ENCODE measurements at regions of chr19 and their contacts with region 1.

Region 1: GRCh38 chr19:17859533-17860330 is at the start of gene RPL18A:
- DNase-seq: peak; percentile 94 to 100 (median 99)
- ATAC-seq: peak; percentile 93 to 96 (median 96)
- H3K4me3 ChIP-seq: peak within 1 kb of the TSS; percentile 84 to 94
- H3K4me3 Mint-ChIP-seq: peak within 1 kb of the TSS; percentile 88 to 100 (median 90)
- H3K27ac ChIP-seq: peak within 1 kb of the TSS; percentile 48
- H3K27ac Mint-ChIP-seq: peak within 1 kb of the TSS; percentile 91 to 98
- H3K4me1 ChIP-seq: peaks cover 7 to 43% of the 10 kb centered on the region in 2 experiments
- H3K4me1 Mint-ChIP-seq: peaks cover 28 to 43% (median 32%) of the 10 kb centered on the region in 3 donors
- H3K27me3 ChIP-seq: no peaks in the 10 kb centered on the region
- H3K27me3 Mint-ChIP-seq: no peaks in the 10 kb centered on the region
- total RNA-seq, gene RPL18A: 3,000 to 4,207 (median 4,048) TPM

Region 2: GRCh38 chr19:17841810-17842662 is 17.7 kb before region 1 on chr19:
- CTCF ChIA-PET with region 1: interaction called, 3 to 10 read pairs
- POLR2A ChIA-PET with region 1: interaction called in 1 of 2 experiments, 6 read pairs
- DNase-seq: peak in 33 of 35 experiments; percentile 20 to 66 (median 46)
- ATAC-seq: peak; percentile 17 to 68 (median 40)
- H3K4me3 ChIP-seq: no peak overlapping the region
- H3K4me3 Mint-ChIP-seq: no peak overlapping the region
- H3K27ac ChIP-seq: no peak overlapping the region
- H3K27ac Mint-ChIP-seq: no peak overlapping the region
- H3K4me1 ChIP-seq: peaks cover 9 to 57% of the 10 kb centered on the region in 2 experiments
- H3K4me1 Mint-ChIP-seq: peaks cover 37 to 41% (median 41%) of the 10 kb centered on the region in 3 donors
- H3K27me3 ChIP-seq: no peaks in the 10 kb centered on the region
- H3K27me3 Mint-ChIP-seq: no peaks in the 10 kb centered on the region

Region 3: DNA sequence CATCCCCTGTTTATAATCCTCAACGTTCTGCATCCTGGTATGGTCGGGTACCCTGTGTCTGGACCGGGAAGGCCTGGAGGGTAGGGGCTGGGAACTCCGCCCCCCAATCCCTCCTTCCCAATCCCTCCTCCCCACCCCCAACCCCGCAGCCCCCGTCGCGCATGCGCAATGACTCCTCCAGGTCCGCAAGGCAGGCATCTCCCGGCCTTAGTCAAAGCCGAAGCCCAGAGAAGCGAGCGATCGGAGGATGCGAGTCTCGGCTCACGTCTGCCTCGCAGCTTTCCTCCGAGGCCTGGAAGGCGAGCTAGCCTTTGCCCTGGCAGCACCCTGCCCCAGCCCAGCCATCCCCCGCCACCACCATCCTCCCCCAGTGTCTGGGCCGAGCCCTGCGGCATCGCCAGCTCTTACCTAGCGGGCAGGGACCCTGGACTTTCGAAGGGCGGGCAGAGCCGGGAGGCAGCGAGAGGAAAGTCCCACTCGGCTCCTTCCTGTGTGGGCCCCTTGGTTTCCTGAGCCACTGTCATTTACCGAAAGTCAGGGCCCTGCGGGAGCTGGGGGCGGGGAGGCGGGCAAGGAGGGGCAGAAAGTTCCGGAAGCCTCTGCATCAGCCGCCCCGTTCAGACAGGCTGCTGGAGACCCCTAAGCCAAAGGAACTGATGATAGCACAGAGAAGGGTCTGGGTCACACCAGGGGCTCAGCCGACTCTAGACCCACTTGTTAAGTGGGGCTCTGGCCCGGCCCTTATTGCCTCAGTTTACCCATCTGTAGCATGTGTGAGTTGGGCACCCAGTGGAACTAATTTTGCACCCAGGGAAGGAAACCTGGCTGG is 12.0 kb before region 1 on chr19 and contains the start of gene JAK3:
- CTCF ChIA-PET with region 1: interaction called, 4 to 41 read pairs
- POLR2A ChIA-PET with region 1: interaction called, 6 to 14 read pairs
- DNase-seq: peak; percentile 67 to 92 (median 87)
- ATAC-seq: peak; percentile 82 to 90 (median 82)
- H3K4me3 ChIP-seq: peak within 1 kb of the TSS; percentile 68 to 73
- H3K4me3 Mint-ChIP-seq: peak within 1 kb of the TSS; percentile 83 to 93 (median 93)
- H3K27ac ChIP-seq: peak within 1 kb of the TSS; percentile 95
- H3K27ac Mint-ChIP-seq: peak within 1 kb of the TSS; percentile 92 to 99
- H3K4me1 ChIP-seq: peaks cover 27 to 85% of the 10 kb centered on the region in 2 experiments
- H3K4me1 Mint-ChIP-seq: peaks cover 70 to 76% (median 75%) of the 10 kb centered on the region in 3 donors
- H3K27me3 ChIP-seq: no peaks in the 10 kb centered on the region
- H3K27me3 Mint-ChIP-seq: no peaks in the 10 kb centered on the region
- total RNA-seq, gene JAK3: 120 to 224 (median 127) TPM

Region 4: DNA sequence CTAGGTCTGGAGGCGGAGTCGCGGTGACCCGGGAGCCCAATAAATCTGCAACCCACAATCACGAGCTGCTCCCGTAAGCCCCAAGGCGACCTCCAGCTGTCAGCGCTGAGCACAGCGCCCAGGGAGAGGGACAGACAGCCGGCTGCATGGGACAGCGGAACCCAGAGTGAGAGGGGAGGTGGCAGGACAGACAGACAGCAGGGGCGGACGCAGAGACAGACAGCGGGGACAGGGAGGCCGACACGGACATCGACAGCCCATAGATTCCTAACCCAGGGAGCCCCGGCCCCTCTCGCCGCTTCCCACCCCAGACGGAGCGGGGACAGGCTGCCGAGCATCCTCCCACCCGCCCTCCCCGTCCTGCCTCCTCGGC is 12.1 kb after region 1 on chr19 and contains the start of gene SLC5A5:
- CTCF ChIA-PET with region 1: interaction called in 1 of 2 experiments, 10 read pairs
- POLR2A ChIA-PET with region 1: no interaction called
- DNase-seq: peak in 2 of 35 experiments; percentile 27 to 33
- ATAC-seq: peak in 3 of 4 experiments; percentile 8 to 15 (median 14)
- H3K4me3 ChIP-seq: peak within 1 kb of the TSS; percentile 54 to 60
- H3K4me3 Mint-ChIP-seq: peak within 1 kb of the TSS; percentile 73 to 85 (median 80)
- H3K27ac ChIP-seq: peak within 1 kb of the TSS; percentile 12
- H3K27ac Mint-ChIP-seq: peak within 1 kb of the TSS; percentile 58 to 80
- H3K4me1 ChIP-seq: peaks cover 5 to 37% of the 10 kb centered on the region in 2 experiments
- H3K4me1 Mint-ChIP-seq: peaks cover 13 to 32% (median 16%) of the 10 kb centered on the region in 3 donors
- H3K27me3 ChIP-seq: peaks cover 0 to 37% of the 10 kb centered on the region in 2 experiments
- H3K27me3 Mint-ChIP-seq: no peaks in the 10 kb centered on the region
- total RNA-seq, gene SLC5A5: 2.1 to 5.7 (median 3.5) TPM

Region 5: DNA sequence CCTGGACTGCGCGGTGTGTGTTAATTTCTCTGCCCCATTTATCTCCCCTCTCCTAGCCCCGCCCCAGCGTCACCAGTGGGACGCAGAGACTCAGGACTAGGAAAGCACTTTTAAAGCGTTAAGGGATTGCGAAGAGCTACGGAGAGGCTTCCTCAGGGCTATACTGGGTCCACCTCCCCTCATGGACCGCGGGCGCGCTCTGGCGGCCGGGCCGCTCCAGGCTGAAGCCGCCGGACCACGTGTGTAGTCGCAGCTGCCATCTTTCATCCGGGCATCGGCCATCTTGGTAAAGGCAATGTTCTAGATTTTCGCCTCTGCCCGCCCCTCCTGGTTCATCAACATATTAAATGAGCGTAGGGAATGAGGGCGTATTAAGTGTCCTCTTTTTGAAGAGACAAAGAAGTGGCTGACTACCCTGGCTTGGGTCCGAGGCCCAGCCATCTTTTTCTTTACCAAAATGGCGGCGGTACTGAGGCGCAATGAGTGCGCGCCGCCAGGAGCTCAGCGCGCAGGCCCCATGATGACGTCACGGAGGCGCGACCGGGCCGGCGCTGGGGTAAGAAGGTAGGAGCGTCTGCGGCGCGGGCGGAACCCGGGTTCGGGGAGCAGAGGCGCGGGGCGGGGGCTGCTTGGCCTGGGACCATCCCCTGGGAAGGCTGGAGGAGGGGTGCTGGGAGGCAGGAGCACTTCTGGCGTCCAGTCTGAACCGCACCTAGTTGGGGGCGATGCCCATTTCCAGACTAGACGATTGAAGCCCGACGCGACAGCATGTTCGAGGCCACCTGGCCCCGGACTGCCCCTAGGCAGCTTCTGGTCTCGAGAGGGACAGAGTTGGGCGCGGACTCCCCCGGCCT is 73.0 kb after region 1 on chr19 and contains the start of gene CCDC124:
- CTCF ChIA-PET with region 1: interaction called, 7 to 139 read pairs
- POLR2A ChIA-PET with region 1: interaction called, 7 to 14 read pairs
- DNase-seq: peak; percentile 83 to 96 (median 89)
- ATAC-seq: peak; percentile 96 to 97 (median 96)
- H3K4me3 ChIP-seq: peak within 1 kb of the TSS; percentile 76 to 90
- H3K4me3 Mint-ChIP-seq: peak within 1 kb of the TSS; percentile 82 to 88 (median 84)
- H3K27ac ChIP-seq: peak within 1 kb of the TSS; percentile 94
- H3K27ac Mint-ChIP-seq: peak within 1 kb of the TSS; percentile 93 to 94
- H3K4me1 ChIP-seq: peaks cover 6 to 23% of the 10 kb centered on the region in 2 experiments
- H3K4me1 Mint-ChIP-seq: peaks cover 11 to 20% (median 14%) of the 10 kb centered on the region in 3 donors
- H3K27me3 ChIP-seq: peaks cover 0 to 4% of the 10 kb centered on the region in 2 experiments
- H3K27me3 Mint-ChIP-seq: no peaks in the 10 kb centered on the region
- total RNA-seq, gene CCDC124: 24.8 to 51.1 (median 41.5) TPM

Region 6: DNA sequence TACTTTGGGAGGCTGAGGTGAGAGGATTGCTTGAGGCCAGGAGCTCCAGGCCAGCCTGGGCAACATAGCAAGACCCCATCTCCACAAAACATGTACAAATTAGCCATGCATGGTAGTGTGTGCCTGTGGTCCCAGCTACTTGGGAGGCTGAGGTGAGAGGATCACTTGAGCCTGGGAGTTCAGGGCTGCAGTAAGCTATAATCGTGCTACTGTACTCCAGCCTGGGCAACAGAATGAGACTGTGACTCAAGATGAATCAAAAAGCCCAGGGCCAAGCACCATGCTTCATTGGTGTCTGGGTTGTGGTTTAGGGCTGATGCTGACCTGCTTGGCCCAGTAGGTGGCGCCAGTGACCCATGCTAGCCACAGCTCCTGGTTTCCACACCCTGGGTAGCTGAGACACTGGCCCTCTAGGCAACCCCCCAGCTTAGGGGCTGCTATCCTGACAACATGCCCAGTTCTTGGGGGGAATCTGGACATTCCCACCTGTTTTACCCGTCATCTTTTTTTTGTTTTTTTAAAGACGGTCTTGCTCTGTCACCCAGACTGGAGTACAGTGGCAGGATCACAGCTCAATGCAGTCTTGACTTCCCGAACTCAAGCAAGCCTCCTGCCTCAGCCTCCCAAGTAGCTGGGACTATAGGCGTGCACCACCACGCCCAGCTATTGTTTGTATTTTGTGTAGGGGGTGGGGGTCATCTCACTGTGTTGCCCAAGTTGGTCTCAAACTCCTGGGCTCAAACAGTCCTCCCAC is 78.5 kb after region 1 on chr19:
- CTCF ChIA-PET with region 1: interaction called, 7 to 139 read pairs
- POLR2A ChIA-PET with region 1: interaction called in 1 of 2 experiments, 7 read pairs
- DNase-seq: peak; percentile 52 to 92 (median 77)
- ATAC-seq: peak; percentile 90 to 96 (median 90)
- H3K4me3 ChIP-seq: no peak overlapping the region
- H3K4me3 Mint-ChIP-seq: no peak overlapping the region
- H3K27ac ChIP-seq: no peak overlapping the region
- H3K27ac Mint-ChIP-seq: no peak overlapping the region
- H3K4me1 ChIP-seq: peaks cover 4 to 15% of the 10 kb centered on the region in 2 experiments
- H3K4me1 Mint-ChIP-seq: peaks cover 7 to 8% (median 7%) of the 10 kb centered on the region in 3 donors
- H3K27me3 ChIP-seq: no peaks in the 10 kb centered on the region
- H3K27me3 Mint-ChIP-seq: no peaks in the 10 kb centered on the region

Measured in T-cell (primary cell).